CD4-positive, alpha-beta memory T cell (primary cell): ENCODE measurements at regions of chr2 and their contacts with region 1.

Region 1: GRCh38 chr2:203238704-203239526 is at the start of gene CYP20A1:
- DNase-seq: peak; percentile 95 to 99 (median 98)
- H3K4me3 ChIP-seq: peak within 1 kb of the TSS; percentile 91 to 100
- H3K4me3 Mint-ChIP-seq: peak within 1 kb of the TSS; percentile 94 to 100 (median 98)
- H3K27ac ChIP-seq: peak within 1 kb of the TSS; percentile 90
- H3K27ac Mint-ChIP-seq: peak within 1 kb of the TSS; percentile 98 to 100 (median 100)
- H3K4me1 ChIP-seq: peaks cover 19% of the 10 kb centered on the region
- H3K4me1 Mint-ChIP-seq: peaks cover 23 to 52% (median 28%) of the 10 kb centered on the region in 4 donors
- H3K27me3 ChIP-seq: no peaks in the 10 kb centered on the region
- H3K27me3 Mint-ChIP-seq: no peaks in the 10 kb centered on the region
- total RNA-seq, gene CYP20A1: 47.1 to 50.8 TPM

Region 2: DNA sequence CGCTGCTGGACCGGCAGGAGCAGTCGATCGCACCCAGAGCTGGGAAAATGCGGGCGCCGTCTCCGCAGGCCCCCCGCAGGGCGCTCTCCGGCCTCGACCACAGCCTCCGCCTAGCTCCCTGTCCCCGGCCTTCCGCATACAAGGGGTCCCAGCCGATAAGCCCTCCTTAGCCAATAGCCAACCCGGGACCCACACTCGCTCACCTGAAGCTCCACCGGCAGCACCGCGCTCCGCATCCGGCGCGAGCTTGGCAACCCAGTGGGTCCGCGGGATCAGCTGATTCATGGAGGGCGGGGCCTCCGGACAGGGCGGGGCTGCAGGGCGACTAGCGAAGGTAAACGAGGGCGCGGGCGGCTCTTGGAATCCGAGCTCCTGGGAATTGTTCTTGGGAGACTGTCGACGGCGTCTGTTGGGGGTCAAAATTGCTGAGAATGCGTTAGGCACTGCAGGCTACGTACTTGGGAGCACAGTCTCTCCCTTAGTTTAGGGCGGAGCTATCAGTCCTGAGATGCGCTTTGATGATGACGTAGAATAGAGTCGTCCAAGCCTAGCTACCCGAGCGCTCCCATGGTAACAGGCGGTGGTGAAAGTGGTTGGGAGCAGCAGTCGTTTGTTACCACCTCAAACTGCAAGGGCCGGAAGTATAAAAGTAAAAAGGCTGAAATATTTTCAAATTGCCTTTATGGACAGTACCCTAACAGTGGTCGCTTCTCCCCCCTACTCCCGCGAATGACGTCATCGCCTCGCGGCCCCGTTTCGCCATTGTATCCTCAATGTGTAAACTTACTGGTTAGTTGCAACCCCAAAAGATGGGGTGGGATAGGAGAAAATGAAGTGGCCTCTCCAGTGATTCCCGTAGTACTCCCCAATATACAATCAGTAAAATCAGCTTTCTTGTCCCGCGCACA is 1458.0 kb before region 1 on chr2 and contains the start of gene ALS2:
- CTCF ChIA-PET with region 1: no interaction called
- POLR2A ChIA-PET with region 1: no interaction called
- intact Hi-C with region 1: loop called (anchors 2 kb)
- DNase-seq: peak; percentile 94 to 97 (median 96)
- H3K4me3 ChIP-seq: peak within 1 kb of the TSS; percentile 89 to 95
- H3K4me3 Mint-ChIP-seq: peak within 1 kb of the TSS; percentile 93 to 99 (median 97)
- H3K27ac ChIP-seq: peak within 1 kb of the TSS; percentile 76
- H3K27ac Mint-ChIP-seq: peak within 1 kb of the TSS; percentile 85 to 100 (median 99)
- H3K4me1 ChIP-seq: peaks cover 15% of the 10 kb centered on the region
- H3K4me1 Mint-ChIP-seq: peaks cover 11 to 22% (median 15%) of the 10 kb centered on the region in 4 donors
- H3K27me3 ChIP-seq: no peaks in the 10 kb centered on the region
- H3K27me3 Mint-ChIP-seq: peaks cover 1 to 4% of the 10 kb centered on the region in 2 donors
- total RNA-seq, gene ALS2: 9.8 to 10.5 TPM

Region 3: DNA sequence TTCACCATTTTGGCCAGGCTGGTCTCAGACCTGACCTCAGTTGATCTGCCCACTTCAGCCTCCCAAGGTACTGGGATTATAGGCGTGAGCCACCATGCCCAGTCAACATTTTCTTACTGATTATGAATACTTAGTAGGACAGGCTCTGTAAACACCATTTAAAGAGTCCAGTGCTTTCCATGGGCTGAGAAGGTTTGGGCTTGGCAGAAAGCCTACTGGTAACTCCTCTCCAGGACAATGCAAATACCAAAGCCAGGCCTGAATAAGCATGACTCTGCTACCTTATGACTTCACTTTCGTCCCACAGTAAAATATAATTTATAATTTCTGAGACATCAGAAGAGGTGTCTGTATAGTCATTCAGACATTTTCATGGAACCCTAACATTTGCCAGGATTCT is 664.4 kb before region 1 on chr2:
- CTCF ChIA-PET with region 1: no interaction called
- POLR2A ChIA-PET with region 1: no interaction called
- intact Hi-C with region 1: loop called (anchors 5 kb)
- DNase-seq: no peak
- H3K4me3 ChIP-seq: no peak overlapping the region
- H3K4me3 Mint-ChIP-seq: no peak overlapping the region
- H3K27ac ChIP-seq: no peak overlapping the region
- H3K27ac Mint-ChIP-seq: peak overlapping the region in 1 of 7 donors; percentile 37
- H3K4me1 ChIP-seq: no peaks in the 10 kb centered on the region
- H3K4me1 Mint-ChIP-seq: no peaks in the 10 kb centered on the region
- H3K27me3 ChIP-seq: no peaks in the 10 kb centered on the region
- H3K27me3 Mint-ChIP-seq: no peaks in the 10 kb centered on the region

Region 4: GRCh38 chr2:202870431-202871299 is 368.2 kb before region 1 on chr2:
- CTCF ChIA-PET with region 1: no interaction called
- POLR2A ChIA-PET with region 1: no interaction called
- intact Hi-C with region 1: loop called (anchors 5 kb)
- DNase-seq: peak; percentile 44 to 57 (median 51)
- H3K4me3 ChIP-seq: peak overlapping the region; percentile 59 to 62
- H3K4me3 Mint-ChIP-seq: peak overlapping the region; percentile 87 to 97 (median 94)
- H3K27ac ChIP-seq: peak overlapping the region; percentile 51
- H3K27ac Mint-ChIP-seq: peak overlapping the region in 6 of 7 donors; percentile 18 to 71 (median 59)
- H3K4me1 ChIP-seq: peaks cover 3% of the 10 kb centered on the region
- H3K4me1 Mint-ChIP-seq: peaks cover 5 to 13% (median 9%) of the 10 kb centered on the region in 4 donors
- H3K27me3 ChIP-seq: no peaks in the 10 kb centered on the region
- H3K27me3 Mint-ChIP-seq: no peaks in the 10 kb centered on the region

Region 5: DNA sequence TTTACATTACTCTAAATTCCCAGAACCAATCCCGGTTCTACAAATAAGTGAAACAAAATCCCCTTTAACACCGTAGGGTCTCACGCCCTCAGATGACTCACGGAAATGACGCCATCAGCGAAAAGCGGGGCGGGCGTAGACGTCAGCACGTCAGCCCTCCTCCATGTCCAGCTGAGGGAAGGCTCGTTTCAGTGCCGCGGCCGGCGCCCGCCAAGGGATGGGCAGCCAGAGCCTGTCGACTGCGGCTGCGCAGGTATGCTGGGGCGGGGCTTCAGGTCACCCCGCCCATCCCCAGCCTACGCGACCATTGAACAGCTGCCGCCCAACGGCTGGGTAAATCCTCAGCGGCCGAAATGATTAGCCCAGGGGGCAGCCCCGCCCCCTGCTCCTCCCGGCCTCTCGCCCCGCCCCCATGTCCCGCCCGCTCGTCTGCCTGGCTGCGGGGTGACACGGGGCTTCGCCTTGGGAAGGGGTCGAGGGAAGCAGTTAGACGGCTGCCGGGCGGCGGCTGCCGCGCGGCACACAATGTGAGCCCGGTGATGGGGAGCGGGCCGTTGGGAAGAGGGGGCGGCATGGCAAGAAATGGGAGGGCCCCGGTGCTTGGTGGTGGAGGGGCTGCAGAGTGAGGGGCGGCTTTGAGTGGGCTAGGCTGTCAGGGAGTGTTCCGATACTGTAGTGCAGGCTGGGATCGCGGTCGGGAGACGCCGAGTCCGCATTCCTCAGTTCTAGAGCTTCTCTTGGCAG is 224.3 kb before region 1 on chr2 and contains the start of gene NBEAL1:
- CTCF ChIA-PET with region 1: no interaction called
- POLR2A ChIA-PET with region 1: interaction called, 15 read pairs
- intact Hi-C with region 1: loop called (anchors 1 kb)
- DNase-seq: peak; percentile 95 to 98 (median 95)
- H3K4me3 ChIP-seq: peak within 1 kb of the TSS; percentile 87 to 93
- H3K4me3 Mint-ChIP-seq: peak within 1 kb of the TSS; percentile 86 to 98 (median 94)
- H3K27ac ChIP-seq: peak within 1 kb of the TSS; percentile 85
- H3K27ac Mint-ChIP-seq: peak within 1 kb of the TSS; percentile 88 to 99 (median 97)
- H3K4me1 ChIP-seq: peaks cover 32% of the 10 kb centered on the region
- H3K4me1 Mint-ChIP-seq: peaks cover 28 to 47% (median 34%) of the 10 kb centered on the region in 4 donors
- H3K27me3 ChIP-seq: no peaks in the 10 kb centered on the region
- H3K27me3 Mint-ChIP-seq: peaks cover 0 to 1% of the 10 kb centered on the region in 2 donors
- total RNA-seq, gene NBEAL1: 15.1 to 15.9 TPM

Region 6: DNA sequence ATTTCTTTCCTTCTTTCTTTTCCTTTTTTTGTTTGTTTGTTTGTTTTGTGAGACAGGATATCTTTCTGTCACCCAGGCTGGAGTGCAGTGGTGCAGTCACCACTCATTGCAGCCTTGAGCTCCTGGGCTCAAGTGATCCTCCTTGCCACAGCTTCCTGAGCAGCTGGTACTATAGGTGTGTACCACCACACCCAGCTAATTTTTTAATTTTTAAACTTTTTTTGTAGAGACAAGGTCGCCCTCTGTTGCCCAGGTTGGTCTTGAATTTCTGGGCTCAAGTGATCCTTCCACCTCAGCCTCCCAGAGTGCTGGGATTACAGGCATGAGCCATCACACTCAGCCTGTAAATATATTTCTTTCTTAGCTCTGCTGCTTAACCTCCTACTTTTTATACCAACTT is 83.5 kb before region 1 on chr2:
- CTCF ChIA-PET with region 1: no interaction called
- POLR2A ChIA-PET with region 1: no interaction called
- intact Hi-C with region 1: no loop called
- DNase-seq: peak in 4 of 5 donors; percentile 10 to 20 (median 17)
- H3K4me3 ChIP-seq: no peak overlapping the region
- H3K4me3 Mint-ChIP-seq: peak overlapping the region in 1 of 8 donors; percentile 14
- H3K27ac ChIP-seq: no peak overlapping the region
- H3K27ac Mint-ChIP-seq: peak overlapping the region in 6 of 7 donors; percentile 20 to 75 (median 40)
- H3K4me1 ChIP-seq: peaks cover 9% of the 10 kb centered on the region
- H3K4me1 Mint-ChIP-seq: peaks cover 7 to 12% (median 10%) of the 10 kb centered on the region in 4 donors
- H3K27me3 ChIP-seq: no peaks in the 10 kb centered on the region
- H3K27me3 Mint-ChIP-seq: no peaks in the 10 kb centered on the region

Region 7: DNA sequence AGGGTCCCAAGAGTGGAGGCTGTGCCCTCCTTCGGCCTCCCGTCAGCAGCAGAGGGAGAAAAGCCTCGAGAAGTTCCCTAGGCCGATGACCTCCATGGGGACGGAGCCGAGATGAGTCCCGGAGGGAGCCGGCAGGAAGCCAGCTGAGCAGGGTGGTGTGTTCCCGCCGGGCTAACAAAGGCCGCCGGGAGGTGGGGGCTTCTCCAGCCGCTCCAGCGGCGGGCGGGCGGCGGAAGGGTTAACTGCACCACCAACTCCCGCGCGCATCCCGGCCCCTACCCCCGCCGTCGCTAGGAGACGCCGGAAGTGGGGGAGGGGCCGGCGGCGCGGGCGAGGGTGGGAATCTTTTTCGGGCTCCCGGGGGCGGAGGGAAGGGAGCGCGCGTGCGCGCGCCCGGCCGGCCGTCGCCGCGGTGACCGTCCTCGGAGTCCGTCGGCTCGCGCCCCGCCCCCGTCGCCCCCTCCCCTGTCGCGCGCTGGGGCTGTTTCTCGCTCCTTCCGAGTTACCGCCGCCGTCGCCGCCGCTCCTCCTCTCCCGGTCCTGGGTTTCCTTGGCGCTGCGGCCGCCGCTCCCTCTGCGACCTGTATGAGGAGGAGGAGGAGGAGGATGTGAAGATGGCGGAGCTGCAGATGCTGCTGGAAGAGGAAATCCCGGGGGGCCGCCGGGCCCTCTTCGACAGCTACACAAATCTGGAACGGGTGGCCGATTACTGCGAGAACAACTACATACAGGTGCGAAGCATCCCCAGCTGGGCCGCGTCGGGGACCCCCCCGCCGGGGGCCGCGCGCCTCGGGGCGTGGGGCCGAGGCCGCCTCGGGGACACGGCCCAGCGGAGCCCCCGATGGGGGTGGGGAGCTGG is 89.2 kb after region 1 on chr2 and contains the start of gene ABI2:
- CTCF ChIA-PET with region 1: no interaction called
- POLR2A ChIA-PET with region 1: interaction called, 13 read pairs
- intact Hi-C with region 1: loop called (anchors 2 kb)
- DNase-seq: peak; percentile 44 to 58 (median 48)
- H3K4me3 ChIP-seq: peak within 1 kb of the TSS; percentile 71 to 76
- H3K4me3 Mint-ChIP-seq: peak within 1 kb of the TSS; percentile 92 to 98 (median 94)
- H3K27ac ChIP-seq: peak within 1 kb of the TSS; percentile 63
- H3K27ac Mint-ChIP-seq: peak within 1 kb of the TSS; percentile 80 to 98 (median 92)
- H3K4me1 ChIP-seq: peaks cover 21% of the 10 kb centered on the region
- H3K4me1 Mint-ChIP-seq: peaks cover 19 to 29% (median 24%) of the 10 kb centered on the region in 4 donors
- H3K27me3 ChIP-seq: no peaks in the 10 kb centered on the region
- H3K27me3 Mint-ChIP-seq: no peaks in the 10 kb centered on the region
- total RNA-seq, gene ABI2: 30.6 to 39.1 TPM